ENCODE measurements at regions of chr1 and their contacts with region 1.

Region 1: DNA sequence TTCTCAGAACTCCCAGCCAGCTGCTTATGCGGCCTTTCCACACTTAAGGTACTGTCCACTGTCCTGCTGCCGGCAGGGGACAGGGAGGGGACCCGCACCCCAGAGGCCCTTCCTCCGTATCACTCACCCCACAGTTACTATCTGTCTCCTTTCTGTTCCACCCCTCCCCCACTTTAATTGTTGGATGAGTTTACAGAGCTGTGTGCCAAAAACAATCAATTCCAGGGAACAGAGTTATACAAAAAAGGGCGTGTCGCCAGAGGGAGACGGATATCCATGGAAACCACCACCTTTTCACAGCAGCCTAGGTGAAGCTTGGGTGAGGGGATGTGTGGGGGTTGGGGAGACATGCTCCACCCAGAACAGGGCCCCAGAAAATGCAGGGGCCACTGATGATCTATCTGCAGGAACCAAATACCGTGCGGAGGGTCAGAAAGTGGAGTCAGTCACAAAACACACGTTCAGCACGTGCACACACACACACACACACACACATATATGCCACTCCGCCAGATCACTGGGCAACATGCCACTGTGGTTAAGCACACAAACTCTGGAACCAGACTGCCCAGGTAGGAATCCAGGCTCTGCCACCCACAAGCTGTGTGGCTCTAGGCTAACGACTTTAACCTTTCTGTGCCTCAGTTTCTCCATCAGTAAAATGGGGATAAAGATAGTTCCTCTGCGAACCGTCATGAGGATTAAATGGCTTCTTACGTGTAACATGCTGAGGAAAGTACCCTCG is 30.5 kb downstream of the CASZ1 start:
- DNase-seq: peak; percentile 31
- H3K4me3 ChIP-seq: no peak overlapping the region
- H3K27ac ChIP-seq: no peak overlapping the region
- H3K4me1 ChIP-seq: peaks cover 8% of the 10 kb centered on the region
- H3K27me3 ChIP-seq: no peaks in the 10 kb centered on the region
- CTCF ChIP-seq: no peak

Region 2: DNA sequence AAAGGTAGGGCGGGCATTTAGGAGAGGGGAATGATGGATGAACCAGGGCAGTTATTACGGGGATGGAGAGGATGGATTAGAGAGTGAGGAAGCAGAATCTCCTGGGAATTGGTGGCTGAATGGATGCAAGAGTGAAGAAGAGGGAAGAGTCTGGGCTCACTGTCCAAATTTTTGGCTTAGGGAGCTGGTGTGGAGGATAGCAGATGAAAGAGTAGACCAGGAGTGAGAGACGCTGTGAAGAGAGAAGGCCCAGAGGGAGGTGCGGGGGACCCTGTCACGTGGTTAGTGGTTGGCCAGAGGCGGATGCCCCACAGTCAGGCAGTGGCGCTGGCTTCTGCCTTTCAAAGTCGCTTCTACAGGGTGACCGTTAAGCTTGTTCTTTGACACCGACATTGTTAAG is 212.8 kb before region 1 on chr1:
- CTCF ChIA-PET with region 1: no interaction called
- dilution Hi-C with region 1: no loop called
- in situ Hi-C with region 1: no loop called
- intact Hi-C with region 1: no loop called
- DNase-seq: no peak
- H3K4me3 ChIP-seq: no peak overlapping the region
- H3K27ac ChIP-seq: no peak overlapping the region
- H3K4me1 ChIP-seq: peaks cover 8% of the 10 kb centered on the region
- H3K27me3 ChIP-seq: no peaks in the 10 kb centered on the region
- CTCF ChIP-seq: no peak

Region 3: GRCh38 chr1:10714337-10715114 is 51.4 kb before region 1 on chr1:
- CTCF ChIA-PET with region 1: no interaction called
- dilution Hi-C with region 1: loop called (anchors 5 kb)
- in situ Hi-C with region 1: no loop called
- intact Hi-C with region 1: no loop called
- DNase-seq: no peak
- H3K4me3 ChIP-seq: no peak overlapping the region
- H3K27ac ChIP-seq: no peak overlapping the region
- H3K4me1 ChIP-seq: no peaks in the 10 kb centered on the region
- H3K27me3 ChIP-seq: no peaks in the 10 kb centered on the region
- CTCF ChIP-seq: no peak